ENCODE measurements at regions of chr10 and their contacts with region 1.

Region 1: GRCh38 chr10:69092959-69093850 is 5.3 kb downstream of the SRGN start:
- DNase-seq: peak; percentile 73 to 94
- ATAC-seq: peak; percentile 29 to 72 (median 50)
- H3K4me3 ChIP-seq: no peak overlapping the region
- H3K4me3 Mint-ChIP-seq: peak overlapping the region; percentile 89
- H3K27ac ChIP-seq: peak overlapping the region; percentile 90
- H3K27ac Mint-ChIP-seq: peak overlapping the region; percentile 96
- H3K4me1 ChIP-seq: peaks cover 70% of the 10 kb centered on the region
- H3K4me1 Mint-ChIP-seq: peaks cover 70 to 74% of the 10 kb centered on the region in 2 donors
- H3K27me3 ChIP-seq: no peaks in the 10 kb centered on the region
- H3K27me3 Mint-ChIP-seq: no peaks in the 10 kb centered on the region
- CTCF ChIP-seq: peak; percentile 87

Region 2: GRCh38 chr10:69004821-69005220 is 88.4 kb before region 1 on chr10:
- intact Hi-C with region 1: loop called (anchors 1 kb)
- DNase-seq: peak in 1 of 2 donors; percentile 74
- ATAC-seq: peak; percentile 67 to 90 (median 72)
- H3K4me3 ChIP-seq: no peak overlapping the region
- H3K4me3 Mint-ChIP-seq: no peak overlapping the region
- H3K27ac ChIP-seq: no peak overlapping the region
- H3K27ac Mint-ChIP-seq: peak overlapping the region; percentile 50 to 60
- H3K4me1 ChIP-seq: no peaks in the 10 kb centered on the region
- H3K4me1 Mint-ChIP-seq: peaks cover 5 to 8% of the 10 kb centered on the region in 2 donors
- H3K27me3 ChIP-seq: no peaks in the 10 kb centered on the region
- H3K27me3 Mint-ChIP-seq: no peaks in the 10 kb centered on the region
- CTCF ChIP-seq: peak; percentile 79

Region 3: GRCh38 chr10:69025370-69025896 is 67.8 kb before region 1 on chr10:
- intact Hi-C with region 1: loop called (anchors 1 kb)
- DNase-seq: no peak
- ATAC-seq: no peak
- H3K4me3 ChIP-seq: no peak overlapping the region
- H3K4me3 Mint-ChIP-seq: peak overlapping the region; percentile 4
- H3K27ac ChIP-seq: peak overlapping the region; percentile 34
- H3K27ac Mint-ChIP-seq: peak overlapping the region; percentile 27 to 68
- H3K4me1 ChIP-seq: peaks cover 40% of the 10 kb centered on the region
- H3K4me1 Mint-ChIP-seq: peaks cover 19 to 27% of the 10 kb centered on the region in 2 donors
- H3K27me3 ChIP-seq: no peaks in the 10 kb centered on the region
- H3K27me3 Mint-ChIP-seq: no peaks in the 10 kb centered on the region
- CTCF ChIP-seq: no peak